Activated naive CD8-positive, alpha-beta T cell treated with anti-CD3 and anti-CD28 coated beads, Interleukin-2, amount 10 ng/mL, durations not matched to agents 7 days and 5 days (primary cell): ENCODE measurements at regions of chr19 and their contacts with region 1.

Region 1: GRCh38 chr19:12890787-12891552 is at the start of gene GCDH:
- DNase-seq: peak; percentile 88
- ATAC-seq: peak; percentile 95
- H3K4me3 Mint-ChIP-seq: peak within 1 kb of the TSS; percentile 95
- H3K27ac Mint-ChIP-seq: peak within 1 kb of the TSS; percentile 91
- H3K4me1 Mint-ChIP-seq: peaks cover 22% of the 10 kb centered on the region
- H3K27me3 Mint-ChIP-seq: peaks cover 4% of the 10 kb centered on the region
- total RNA-seq, gene GCDH: 39.7 to 43.4 TPM

Region 2: DNA sequence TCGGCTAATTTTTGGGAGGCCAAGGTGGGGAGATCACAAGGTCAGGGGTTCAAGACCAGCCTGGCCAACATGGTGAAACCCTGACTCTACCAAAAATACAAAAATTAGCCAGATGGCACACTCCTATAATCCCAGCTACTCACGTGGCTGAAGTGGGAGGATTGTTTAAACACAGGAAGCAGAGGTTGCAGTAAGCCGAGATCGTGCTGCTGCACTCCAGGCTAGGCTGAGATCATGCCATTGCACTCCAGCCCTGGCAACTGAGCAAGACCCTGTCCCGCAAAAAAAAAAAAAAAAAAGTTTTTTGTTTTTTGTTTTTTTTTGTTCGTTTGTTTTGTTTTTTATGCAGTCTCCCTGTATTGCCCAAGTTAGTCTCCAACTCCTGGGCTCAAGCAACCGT is 31.4 kb before region 1 on chr19:
- POLR2A ChIA-PET with region 1: no interaction called
- DNase-seq: no peak
- ATAC-seq: no peak
- H3K4me3 Mint-ChIP-seq: no peak overlapping the region
- H3K27ac Mint-ChIP-seq: no peak overlapping the region
- H3K4me1 Mint-ChIP-seq: no peaks in the 10 kb centered on the region
- H3K27me3 Mint-ChIP-seq: peaks cover 12% of the 10 kb centered on the region

Region 3: DNA sequence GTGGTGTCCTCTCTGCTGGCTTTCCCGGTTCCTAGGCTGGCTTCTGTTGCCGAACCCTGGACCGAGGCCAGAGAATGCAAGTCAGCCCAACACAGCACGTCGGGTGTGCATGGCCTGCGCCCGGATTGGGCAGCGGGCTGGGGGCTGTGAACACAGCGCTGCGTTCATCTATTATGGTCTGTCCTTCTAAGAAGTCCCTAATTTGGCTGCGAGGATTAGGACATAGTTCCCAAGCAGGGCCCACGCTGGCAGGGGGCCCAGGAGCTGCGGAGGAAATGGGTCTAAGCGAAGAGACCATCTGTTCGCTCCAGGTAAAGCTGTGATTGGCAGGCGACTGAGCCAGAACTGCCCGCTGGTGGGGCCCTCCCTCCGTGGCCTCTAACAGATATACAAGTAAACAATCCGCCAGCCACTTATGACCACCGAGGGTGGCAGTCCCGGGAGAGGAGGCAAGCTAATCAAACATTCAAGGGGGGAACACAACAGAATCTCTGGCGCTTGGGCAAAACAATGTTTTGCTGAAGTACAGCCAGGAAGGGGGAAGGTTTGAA is 22.1 kb after region 1 on chr19:
- POLR2A ChIA-PET with region 1: interaction called, 27 read pairs
- DNase-seq: no peak
- ATAC-seq: no peak
- H3K4me3 Mint-ChIP-seq: no peak overlapping the region
- H3K27ac Mint-ChIP-seq: peak overlapping the region; percentile 73
- H3K4me1 Mint-ChIP-seq: peaks cover 25% of the 10 kb centered on the region
- H3K27me3 Mint-ChIP-seq: no peaks in the 10 kb centered on the region